Head of caudate nucleus (tissue), 42 donors: ENCODE measurements at regions of chr9 and their contacts with region 1.

Region 1: DNA sequence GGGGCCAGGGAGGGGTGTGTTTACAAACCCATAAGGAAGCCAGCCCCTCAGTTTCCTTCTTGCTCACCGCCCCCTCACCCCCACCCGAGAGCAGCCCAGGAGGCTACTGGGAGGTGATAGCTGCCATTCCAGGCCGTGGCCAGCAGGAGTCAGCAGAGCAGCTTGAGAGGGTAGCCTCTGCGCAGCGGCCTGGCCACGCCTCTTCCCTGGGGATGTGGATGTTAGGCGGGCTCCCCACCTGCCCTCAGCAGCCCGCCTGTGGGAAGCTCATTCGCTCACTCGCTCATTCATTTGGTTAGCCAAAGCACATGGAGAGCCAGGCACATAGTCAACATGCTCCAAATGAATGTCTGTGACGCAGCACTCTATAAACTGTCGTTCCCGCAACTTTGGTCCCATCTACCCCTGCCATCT is 6.1 kb upstream of the DPM2 start:
- DNase-seq: peak; percentile 85 to 97 (median 92)

Region 2: DNA sequence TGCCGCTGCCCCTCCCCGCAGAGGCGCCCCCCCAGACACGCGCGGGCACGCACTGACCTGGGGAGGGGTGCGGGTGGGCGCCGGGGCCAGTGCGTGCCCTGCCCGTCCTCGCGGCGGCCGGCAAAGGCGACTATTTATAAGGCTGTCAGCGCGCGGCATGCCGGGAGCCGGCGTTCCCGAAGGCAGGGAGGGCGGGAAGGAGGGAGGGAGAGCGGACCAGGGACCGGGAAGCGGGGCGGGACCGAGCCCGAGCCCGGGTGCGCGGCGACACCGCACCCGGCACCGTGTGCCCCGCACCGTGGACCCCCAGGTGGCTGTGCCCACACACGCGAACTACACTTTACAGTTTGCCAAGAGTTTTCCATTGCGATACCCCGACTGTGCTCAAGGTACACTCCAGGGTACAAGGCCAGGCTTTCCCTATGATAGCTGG is 66.2 kb before region 1 on chr9 and contains the start of gene AK1:
- intact Hi-C with region 1: no loop called
- DNase-seq: peak; percentile 81 to 96 (median 92)

Region 3: GRCh38 chr9:128034821-128035764 is 91.4 kb after region 1 on chr9:
- intact Hi-C with region 1: loop called (anchors 2 kb)
- DNase-seq: peak; percentile 35 to 88 (median 72)

Region 4: GRCh38 chr9:128067876-128068613 is 124.3 kb after region 1 on chr9 and contains the start of gene SLC25A25:
- intact Hi-C with region 1: loop called (anchors 10 kb)
- DNase-seq: peak; percentile 99 to 100 (median 100)

Region 5: DNA sequence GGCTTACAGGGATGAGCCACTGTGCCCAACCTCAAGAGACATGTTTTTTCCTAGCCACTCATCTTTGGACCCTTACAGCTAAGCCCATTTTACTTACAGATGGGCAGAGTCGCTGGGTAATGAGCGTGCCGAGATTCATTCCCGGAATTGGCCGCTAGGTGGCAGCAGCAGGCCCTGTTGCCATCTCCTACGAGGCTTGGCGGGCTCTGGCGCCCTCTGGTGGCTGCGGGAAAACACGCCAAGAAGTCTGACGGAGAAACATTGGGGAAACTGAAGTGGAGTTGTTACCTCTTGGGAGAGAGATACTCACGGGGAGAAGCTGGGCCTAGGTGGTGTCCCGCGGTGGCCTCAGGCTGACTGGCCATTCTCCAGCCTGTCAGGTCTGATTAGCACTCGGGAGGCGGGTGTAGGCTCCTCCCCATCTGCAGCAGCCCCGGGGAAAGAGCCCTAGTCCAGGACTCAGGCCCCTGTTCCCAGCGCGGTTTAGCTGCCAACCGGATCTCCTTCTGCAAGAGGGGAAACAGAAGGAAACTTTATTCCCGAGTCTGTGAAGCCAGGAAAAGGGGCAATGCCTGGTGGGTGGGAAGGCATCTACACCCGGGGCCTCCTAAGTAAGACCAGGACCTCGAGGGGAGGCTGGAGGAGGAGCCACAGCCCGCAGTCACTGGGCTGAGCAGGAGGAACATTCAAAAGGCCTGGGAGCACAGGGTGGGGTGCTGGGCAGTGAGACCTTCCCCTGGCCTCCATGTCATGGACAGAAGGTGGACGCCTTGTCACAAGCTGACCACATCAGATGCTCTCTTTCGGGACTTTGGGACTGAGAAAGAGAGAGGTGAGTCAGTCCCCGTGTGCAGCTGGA is 174.1 kb after region 1 on chr9:
- intact Hi-C with region 1: loop called (anchors 10 kb)
- DNase-seq: peak; percentile 77 to 100 (median 95)

Region 6: GRCh38 chr9:128316421-128316820 is 372.7 kb after region 1 on chr9:
- intact Hi-C with region 1: no loop called
- DNase-seq: peak; percentile 76 to 98 (median 93)

Region 7: DNA sequence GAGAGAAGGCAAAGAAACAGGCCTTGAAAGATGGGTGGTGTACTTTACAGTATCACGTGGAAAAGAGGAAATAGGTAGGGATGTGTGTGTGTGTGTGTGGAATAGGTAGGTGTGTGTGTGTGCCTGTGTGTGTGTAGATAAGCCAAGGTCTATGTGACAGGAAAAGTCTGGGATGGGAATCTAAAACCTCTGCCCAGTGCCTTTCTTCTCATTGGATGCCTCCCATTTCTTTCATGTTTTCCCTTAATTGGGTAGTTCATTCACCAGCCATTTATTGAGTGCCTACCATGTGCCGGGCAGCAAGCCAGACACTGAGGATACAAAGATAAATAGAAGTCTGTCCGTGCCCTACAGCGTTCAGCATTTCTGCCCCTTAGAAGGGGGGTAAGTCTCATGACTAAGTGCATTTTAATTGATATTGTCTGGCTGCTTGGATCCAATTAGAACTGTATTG is 428.5 kb after region 1 on chr9:
- intact Hi-C with region 1: no loop called
- DNase-seq: peak in 36 of 42 donors; percentile 27 to 92 (median 72)

Region 8: GRCh38 chr9:128575469-128575868 is 631.7 kb after region 1 on chr9:
- intact Hi-C with region 1: no loop called
- DNase-seq: peak in 12 of 42 donors; percentile 7 to 53 (median 22)